ENCODE measurements at regions of chr10 and their contacts with region 1.

Region 1: GRCh38 chr10:13206546-13207443 is 27.4 kb downstream of the UCMA start:
- DNase-seq: no peak
- ATAC-seq: no peak
- H3K4me3 ChIP-seq: no peak overlapping the region
- H3K27ac ChIP-seq: no peak overlapping the region
- H3K4me1 ChIP-seq: no peaks in the 10 kb centered on the region
- H3K27me3 ChIP-seq: no peaks in the 10 kb centered on the region

Region 2: GRCh38 chr10:13276749-13277365 is 70.1 kb after region 1 on chr10:
- intact Hi-C with region 1: loop called in 1 of 2 experiments (anchors 5 kb)
- DNase-seq: no peak
- ATAC-seq: no peak
- H3K4me3 ChIP-seq: no peak overlapping the region
- H3K27ac ChIP-seq: no peak overlapping the region
- H3K4me1 ChIP-seq: no peaks in the 10 kb centered on the region
- H3K27me3 ChIP-seq: no peaks in the 10 kb centered on the region